Activated T-helper 2 cell treated with anti-CD3 and anti-CD28 coated beads, Interferon-gamma antibody, Interleukin-2, Interleukin-4, amounts not matched to agents 10 μg/mL and 5 μg/mL and 100 μg/mL, durations not matched to agents 14 hours and 24 hours and 36 hours (primary cell): ENCODE measurements at regions of chr22 and their contacts with region 1.

Region 1: GRCh38 chr22:25564320-25564978 is at the start of gene GRK3:
- DNase-seq: peak; percentile 69
- H3K4me3 Mint-ChIP-seq: peak within 1 kb of the TSS; percentile 99
- H3K27ac Mint-ChIP-seq: peak within 1 kb of the TSS; percentile 97
- H3K4me1 Mint-ChIP-seq: peaks cover 60% of the 10 kb centered on the region
- H3K27me3 Mint-ChIP-seq: no peaks in the 10 kb centered on the region
- total RNA-seq, gene GRK3: 60.2 and 61.4 TPM in 2 replicates

Region 2: GRCh38 chr22:25772288-25772687 is 207.8 kb after region 1 on chr22:
- intact Hi-C with region 1: loop called (anchors 2 kb)
- DNase-seq: no peak
- H3K4me3 Mint-ChIP-seq: no peak overlapping the region
- H3K27ac Mint-ChIP-seq: peak overlapping the region; percentile 84
- H3K4me1 Mint-ChIP-seq: peaks cover 30% of the 10 kb centered on the region
- H3K27me3 Mint-ChIP-seq: no peaks in the 10 kb centered on the region